Natural killer cell (primary cell): ENCODE measurements at regions of chr1 and their contacts with region 1.

Region 1: GRCh38 chr1:111192658-111193519 is 7.6 kb downstream of the DENND2D start:
- DNase-seq: peak in 1 of 2 donors; percentile 79
- ATAC-seq: peak; percentile 57 to 75 (median 72)
- H3K4me3 ChIP-seq: no peak overlapping the region
- H3K4me3 Mint-ChIP-seq: peak overlapping the region; percentile 55
- H3K27ac ChIP-seq: peak overlapping the region; percentile 70
- H3K27ac Mint-ChIP-seq: peak overlapping the region; percentile 91 to 95
- H3K4me1 ChIP-seq: peaks cover 88% of the 10 kb centered on the region
- H3K4me1 Mint-ChIP-seq: peaks cover 99 to 100% of the 10 kb centered on the region in 2 donors
- H3K27me3 ChIP-seq: no peaks in the 10 kb centered on the region
- H3K27me3 Mint-ChIP-seq: no peaks in the 10 kb centered on the region
- CTCF ChIP-seq: no peak

Region 2: GRCh38 chr1:111227851-111228747 is 35.2 kb after region 1 on chr1:
- intact Hi-C with region 1: loop called (anchors 5 kb)
- DNase-seq: peak in 1 of 2 donors; percentile 23
- ATAC-seq: no peak
- H3K4me3 ChIP-seq: no peak overlapping the region
- H3K4me3 Mint-ChIP-seq: peak overlapping the region; percentile 67
- H3K27ac ChIP-seq: no peak overlapping the region
- H3K27ac Mint-ChIP-seq: peak overlapping the region; percentile 88 to 95
- H3K4me1 ChIP-seq: peaks cover 53% of the 10 kb centered on the region
- H3K4me1 Mint-ChIP-seq: peaks cover 63 to 66% of the 10 kb centered on the region in 2 donors
- H3K27me3 ChIP-seq: no peaks in the 10 kb centered on the region
- H3K27me3 Mint-ChIP-seq: no peaks in the 10 kb centered on the region
- CTCF ChIP-seq: no peak